ENCODE measurements at regions of chrX and their contacts with region 1.

Region 1: DNA sequence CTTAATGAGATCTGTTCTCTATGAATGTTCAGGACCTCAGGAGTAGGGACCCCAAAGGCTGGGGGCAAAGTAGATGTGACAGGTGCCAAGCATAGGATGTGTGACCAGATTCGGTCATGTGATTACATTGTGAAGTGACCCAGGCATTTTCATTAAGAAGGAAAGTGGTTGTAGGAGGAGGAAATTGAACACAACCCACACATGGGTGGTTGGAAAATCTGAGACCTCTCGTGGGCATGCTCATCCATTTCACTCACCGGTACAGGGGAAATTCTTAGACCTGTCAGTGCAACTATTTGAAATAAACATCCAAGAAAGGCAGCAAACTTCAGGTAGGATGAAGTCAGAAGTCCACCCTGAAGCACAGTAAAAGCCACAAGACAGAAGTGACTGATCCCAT is 43.5 kb upstream of the CD99 start:
- DNase-seq: no peak
- H3K4me3 ChIP-seq: no peak overlapping the region
- CTCF ChIP-seq: no peak
- POLR2A ChIP-seq: no peak

Region 2: DNA sequence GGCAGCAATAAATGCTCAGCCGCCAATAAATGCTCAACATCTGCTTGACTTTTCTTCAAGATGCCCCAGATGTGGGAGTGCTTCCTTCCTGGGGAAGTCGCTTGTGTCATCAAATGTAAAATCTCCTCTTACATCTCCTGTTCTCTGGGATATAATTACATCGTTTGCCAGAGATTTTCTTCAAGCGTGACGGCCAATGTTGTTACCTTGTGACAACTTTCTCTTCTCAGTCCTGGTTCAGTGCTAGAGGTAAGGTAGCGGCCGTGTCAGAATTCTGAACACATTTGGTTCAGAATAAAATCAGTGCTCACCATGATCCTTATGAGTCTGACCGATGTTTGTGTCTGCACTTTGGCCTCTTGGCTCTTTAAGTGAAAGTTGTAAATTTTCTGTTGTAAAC is 930.3 kb before region 1 on chrX:
- intact Hi-C with region 1: no loop called
- DNase-seq: no peak
- H3K4me3 ChIP-seq: no peak overlapping the region
- CTCF ChIP-seq: no peak
- POLR2A ChIP-seq: no peak

Region 3: DNA sequence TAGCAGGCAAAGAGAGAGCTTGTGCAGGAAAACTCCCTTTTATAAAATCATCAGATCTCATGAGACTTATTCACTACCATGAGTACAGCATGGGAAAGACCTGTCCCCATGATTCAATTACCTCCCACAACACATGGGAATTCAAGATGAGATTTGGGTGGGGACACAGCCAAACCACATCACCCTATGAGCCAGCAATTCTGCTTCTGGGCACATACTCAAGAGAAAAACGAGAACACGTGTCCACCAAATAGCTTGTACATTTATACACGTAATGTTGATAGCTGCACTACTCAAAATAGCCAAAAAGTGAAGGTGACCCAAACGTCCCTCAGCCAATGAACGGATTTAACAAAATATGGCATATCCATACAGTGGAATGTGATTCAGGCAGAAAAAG is 52.4 kb before region 1 on chrX:
- intact Hi-C with region 1: no loop called
- DNase-seq: no peak
- H3K4me3 ChIP-seq: no peak overlapping the region
- CTCF ChIP-seq: no peak
- POLR2A ChIP-seq: no peak

Region 4: GRCh38 chrX:2809882-2810281 is 162.3 kb after region 1 on chrX:
- intact Hi-C with region 1: loop called (anchors 5 kb)
- DNase-seq: peak in 1 of 2 donors; percentile 68
- H3K4me3 ChIP-seq: no peak overlapping the region
- CTCF ChIP-seq: no peak
- POLR2A ChIP-seq: no peak

Region 5: DNA sequence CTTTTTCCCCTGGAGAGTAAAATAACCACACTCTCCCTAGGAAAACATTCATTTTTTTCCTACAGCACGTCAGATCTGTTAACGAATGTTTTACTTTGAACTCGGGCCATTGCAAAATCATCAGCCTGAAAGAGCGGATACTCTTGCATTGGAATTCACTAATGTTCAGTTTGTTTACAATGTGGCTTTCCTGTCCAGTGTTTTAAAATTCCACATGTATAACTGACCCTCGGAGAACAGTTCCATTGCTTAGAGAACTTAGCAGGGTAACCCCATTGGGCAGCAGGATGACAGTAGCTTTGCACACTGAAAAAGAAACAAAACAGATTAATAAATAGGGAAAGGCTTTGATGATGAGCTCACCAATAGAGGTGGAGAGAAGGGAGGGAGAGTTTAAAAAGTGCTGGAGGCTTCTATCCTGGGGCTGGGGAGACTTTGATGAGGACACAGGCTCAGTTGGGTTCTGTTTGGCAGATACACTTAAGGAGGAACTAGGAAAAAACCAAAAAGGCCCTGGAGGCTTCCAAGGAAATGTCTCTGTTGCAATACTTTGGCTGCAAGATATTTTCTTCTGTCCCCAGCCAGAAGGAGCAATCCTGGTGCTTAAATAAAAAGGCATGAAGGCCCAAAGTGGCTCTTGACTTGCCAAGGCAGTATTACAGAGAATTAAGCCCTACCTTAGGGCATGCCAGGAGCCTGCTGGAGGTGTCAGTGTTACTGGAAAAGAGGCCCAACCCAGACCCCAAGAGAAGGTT is 536.7 kb after region 1 on chrX:
- intact Hi-C with region 1: no loop called
- DNase-seq: peak in 1 of 2 donors; percentile 30
- H3K4me3 ChIP-seq: no peak overlapping the region
- CTCF ChIP-seq: no peak
- POLR2A ChIP-seq: no peak